ENCODE measurements at regions of chr10 and their contacts with region 1.

Region 1: GRCh38 chr10:3811291-3811870 is 26.4 kb upstream of the KLF6 start:
- DNase-seq: no peak
- ATAC-seq: peak; percentile 41
- H3K4me3 Mint-ChIP-seq: peak overlapping the region; percentile 81
- H3K27ac Mint-ChIP-seq: peak overlapping the region; percentile 97
- H3K4me1 Mint-ChIP-seq: peaks cover 75% of the 10 kb centered on the region
- H3K27me3 Mint-ChIP-seq: no peaks in the 10 kb centered on the region

Region 2: GRCh38 chr10:3740157-3740871 is 71.1 kb before region 1 on chr10:
- POLR2A ChIA-PET with region 1: no interaction called
- DNase-seq: no peak
- ATAC-seq: no peak
- H3K4me3 Mint-ChIP-seq: no peak overlapping the region
- H3K27ac Mint-ChIP-seq: no peak overlapping the region
- H3K4me1 Mint-ChIP-seq: peaks cover 12% of the 10 kb centered on the region
- H3K27me3 Mint-ChIP-seq: peaks cover 4% of the 10 kb centered on the region

Region 3: GRCh38 chr10:3828404-3829155 is 17.2 kb after region 1 on chr10:
- POLR2A ChIA-PET with region 1: interaction called, 12 read pairs
- DNase-seq: no peak
- ATAC-seq: peak; percentile 57
- H3K4me3 Mint-ChIP-seq: peak overlapping the region; percentile 69
- H3K27ac Mint-ChIP-seq: peak overlapping the region; percentile 91
- H3K4me1 Mint-ChIP-seq: peaks cover 40% of the 10 kb centered on the region
- H3K27me3 Mint-ChIP-seq: no peaks in the 10 kb centered on the region

Region 4: DNA sequence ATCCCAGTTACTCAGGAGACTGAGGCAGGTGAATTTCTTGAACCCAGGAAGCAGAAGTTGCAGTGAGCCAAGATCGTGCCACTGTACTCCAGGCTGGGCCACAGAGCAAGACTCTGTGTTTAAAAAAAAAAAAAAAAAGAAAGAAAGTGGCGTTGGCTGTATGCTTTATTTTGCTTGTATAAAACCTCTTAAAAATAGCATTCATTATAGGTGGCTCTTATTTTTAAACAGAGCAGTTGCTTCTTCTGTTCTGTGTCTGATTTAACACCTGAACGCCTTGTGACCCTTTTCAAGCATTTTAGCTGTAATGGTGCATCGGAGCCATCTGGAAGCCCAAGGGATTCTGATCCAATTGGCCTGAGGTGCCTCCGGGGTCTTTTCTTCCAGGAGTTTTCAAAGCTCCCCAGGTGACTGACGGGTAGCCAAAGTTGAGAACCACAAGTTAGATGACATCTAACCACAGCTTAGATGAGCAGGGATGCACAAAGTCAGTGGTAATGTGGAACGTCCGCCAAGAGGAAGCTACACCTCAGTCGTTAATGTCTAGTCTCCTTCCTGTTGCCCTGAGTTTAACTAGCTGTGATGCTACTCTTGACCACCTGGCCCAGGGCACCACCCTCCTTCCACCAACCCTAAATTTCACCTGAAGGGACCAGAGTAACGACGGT is 248.2 kb after region 1 on chr10:
- POLR2A ChIA-PET with region 1: interaction called, 13 read pairs
- DNase-seq: no peak
- ATAC-seq: peak; percentile 90
- H3K4me3 Mint-ChIP-seq: peak overlapping the region; percentile 63
- H3K27ac Mint-ChIP-seq: peak overlapping the region; percentile 85
- H3K4me1 Mint-ChIP-seq: peaks cover 25% of the 10 kb centered on the region
- H3K27me3 Mint-ChIP-seq: no peaks in the 10 kb centered on the region